H1 (cell line): ENCODE measurements at regions of chr14 and their contacts with region 1.

Region 1: DNA sequence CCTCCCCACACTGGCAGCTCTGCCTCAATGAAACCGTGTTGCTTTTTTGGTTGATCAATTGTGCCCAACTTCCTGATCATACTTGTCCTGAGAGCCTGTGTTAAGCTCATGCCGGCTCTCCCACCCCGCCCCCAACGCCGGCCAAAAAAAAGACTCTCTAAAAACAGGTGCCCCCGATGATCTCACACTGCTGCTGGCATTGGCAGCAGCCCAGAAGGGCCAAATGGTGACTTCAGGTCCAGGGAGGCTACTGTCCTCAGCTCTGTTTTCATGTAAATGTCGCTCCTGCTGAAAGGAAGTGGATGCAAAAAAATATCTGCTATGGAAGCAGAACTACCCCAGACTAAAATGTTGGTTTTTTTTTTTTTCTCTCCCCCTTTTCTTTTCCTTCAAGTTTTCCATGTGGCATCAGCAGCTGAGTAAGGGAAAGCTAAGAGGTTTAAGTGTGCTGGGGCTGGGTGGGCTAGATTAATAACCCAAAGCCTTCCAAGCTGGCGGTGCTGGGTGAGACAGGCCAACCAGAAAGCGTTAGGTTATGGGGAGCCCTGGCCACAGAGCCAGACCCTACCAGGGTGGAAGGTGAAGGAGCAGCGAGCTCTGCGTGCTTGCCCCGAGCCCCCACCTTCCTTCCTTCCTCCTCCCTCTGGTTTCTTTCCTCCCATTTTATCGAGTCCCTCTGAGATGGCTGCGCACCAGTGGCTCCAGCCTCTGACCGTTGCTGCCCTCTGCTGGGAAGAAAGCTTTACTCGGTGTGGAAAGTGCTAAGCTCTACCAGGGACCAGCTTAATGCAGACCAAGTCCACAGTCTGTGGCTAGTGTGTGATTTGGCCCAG is 396.1 kb downstream of the NRXN3 start:
- DNase-seq: peak; percentile 64 to 93
- H3K4me3 ChIP-seq: peak overlapping the region in 1 of 4 experiments; percentile 29; a peak in 2 of 8 replicates
- H3K27ac ChIP-seq: no peak overlapping the region
- H3K4me1 ChIP-seq: peaks cover 0 to 6% (median 4%) of the 10 kb centered on the region in 4 experiments; a peak in 4 of 7 replicates
- H3K27me3 ChIP-seq: no peaks in the 10 kb centered on the region
- CTCF ChIP-seq: peak; percentile 77 to 94 (median 93)
- EP300 ChIP-seq: no peak
- POLR2A ChIP-seq: no peak
- RAD21 ChIP-seq: peak; percentile 98

Region 2: GRCh38 chr14:78022059-78022458 is 544.2 kb before region 1 on chr14:
- CTCF ChIA-PET with region 1: interaction called, 11 read pairs
- POLR2A ChIA-PET with region 1: no interaction called
- DNase-seq: peak; percentile 68 to 95
- H3K4me3 ChIP-seq: no peak overlapping the region
- H3K27ac ChIP-seq: no peak overlapping the region
- H3K4me1 ChIP-seq: no peaks in the 10 kb centered on the region; a peak in 2 of 7 replicates
- H3K27me3 ChIP-seq: no peaks in the 10 kb centered on the region
- CTCF ChIP-seq: peak; percentile 85 to 94 (median 88)
- EP300 ChIP-seq: no peak
- POLR2A ChIP-seq: no peak
- RAD21 ChIP-seq: peak; percentile 98

Region 3: DNA sequence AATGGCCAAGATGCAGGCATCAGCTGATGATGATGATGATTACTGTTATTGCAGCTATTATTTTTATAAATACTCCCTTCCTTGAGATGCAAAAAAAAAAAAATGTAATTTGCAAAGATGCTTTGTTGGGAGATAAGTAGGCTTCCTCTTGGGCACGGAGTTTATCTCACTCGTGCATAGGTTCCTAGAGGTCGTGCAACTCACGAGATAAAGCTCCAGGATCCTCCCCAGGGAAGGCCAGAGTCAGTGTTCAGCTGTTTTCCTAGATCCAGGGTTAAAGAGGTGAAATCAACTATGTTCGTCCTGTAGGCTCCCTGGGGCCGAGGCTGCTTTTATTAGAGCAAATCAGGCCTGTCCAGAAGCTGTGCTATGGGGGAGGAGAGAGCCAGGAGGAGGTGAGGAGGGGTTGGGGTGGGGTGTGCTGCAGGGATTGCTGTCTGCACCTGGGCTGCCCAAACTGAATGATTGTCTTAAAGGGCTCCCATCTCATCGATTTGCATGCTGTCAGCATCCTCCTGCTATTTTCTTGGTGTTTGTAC is 125.8 kb before region 1 on chr14:
- CTCF ChIA-PET with region 1: interaction called, 29 read pairs
- POLR2A ChIA-PET with region 1: no interaction called
- DNase-seq: no peak
- H3K4me3 ChIP-seq: no peak overlapping the region
- H3K27ac ChIP-seq: no peak overlapping the region
- H3K4me1 ChIP-seq: peaks cover 0 to 3% (median 1%) of the 10 kb centered on the region in 4 experiments; a peak in 2 of 7 replicates
- H3K27me3 ChIP-seq: no peaks in the 10 kb centered on the region
- CTCF ChIP-seq: no peak
- EP300 ChIP-seq: no peak
- POLR2A ChIP-seq: no peak
- RAD21 ChIP-seq: no peak

Region 4: GRCh38 chr14:78581229-78581628 is 15.0 kb after region 1 on chr14:
- CTCF ChIA-PET with region 1: interaction called, 51 read pairs
- POLR2A ChIA-PET with region 1: no interaction called
- DNase-seq: no peak
- H3K4me3 ChIP-seq: no peak overlapping the region
- H3K27ac ChIP-seq: no peak overlapping the region
- H3K4me1 ChIP-seq: no peaks in the 10 kb centered on the region
- H3K27me3 ChIP-seq: no peaks in the 10 kb centered on the region
- CTCF ChIP-seq: no peak
- EP300 ChIP-seq: no peak
- POLR2A ChIP-seq: no peak
- RAD21 ChIP-seq: no peak

Region 5: GRCh38 chr14:78836777-78837176 is 270.5 kb after region 1 on chr14:
- CTCF ChIA-PET with region 1: interaction called, 14 read pairs
- POLR2A ChIA-PET with region 1: no interaction called
- DNase-seq: peak; percentile 74 to 77
- H3K4me3 ChIP-seq: no peak overlapping the region
- H3K27ac ChIP-seq: no peak overlapping the region
- H3K4me1 ChIP-seq: peaks cover 0 to 2% (median 0%) of the 10 kb centered on the region in 4 experiments; a peak in 1 of 7 replicates
- H3K27me3 ChIP-seq: no peaks in the 10 kb centered on the region; a peak in 1 of 7 replicates
- CTCF ChIP-seq: peak; percentile 40 to 96 (median 80)
- EP300 ChIP-seq: peak in 1 of 2 experiments; percentile 8; a peak in 1 of 3 replicates
- POLR2A ChIP-seq: no peak
- RAD21 ChIP-seq: peak; percentile 92 to 96